ENCODE measurements at regions of chr1 and their contacts with region 1.

Region 1: DNA sequence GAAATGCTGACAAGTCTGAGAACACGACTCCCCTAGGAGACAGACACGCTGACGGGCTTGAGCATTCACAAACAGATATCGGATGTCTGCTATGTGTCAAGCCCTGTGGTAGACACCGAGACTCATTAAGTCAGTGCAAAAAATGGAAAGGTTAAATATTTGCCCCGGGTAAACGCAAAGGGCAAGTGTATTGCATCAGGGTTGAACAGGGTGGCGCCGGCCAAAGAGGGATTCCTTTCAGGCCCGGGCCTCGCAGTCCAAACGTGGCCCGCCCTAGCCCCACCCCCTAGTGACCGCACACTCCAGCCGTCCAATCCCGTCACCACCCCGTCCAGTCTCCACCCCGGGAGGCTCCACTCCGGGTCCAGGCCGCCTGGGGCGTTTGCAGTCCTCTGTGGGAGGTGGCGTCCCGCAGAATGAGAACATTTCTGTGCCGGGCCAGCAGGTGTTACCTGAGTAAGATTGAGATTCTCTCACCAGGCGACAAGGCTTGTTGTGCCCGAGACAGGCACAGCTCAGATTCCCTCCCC is 16.3 kb upstream of the TMEM9 start:
- DNase-seq: peak; percentile 97
- H3K4me3 ChIP-seq: peak overlapping the region; percentile 70 to 79
- H3K27ac ChIP-seq: peak overlapping the region in 1 of 2 experiments; percentile 76; a peak in 2 of 4 replicates
- H3K4me1 ChIP-seq: peaks cover 0 to 10% of the 10 kb centered on the region in 2 experiments; a peak in 2 of 4 replicates
- H3K27me3 ChIP-seq: 0 out of 2 replicates have a peak, but pooled peaks cover 7% of the 10 kb centered on the region
- CTCF ChIP-seq: no peak
- EP300 ChIP-seq: no peak
- RAD21 ChIP-seq: no peak

Region 2: GRCh38 chr1:201096035-201096434 is 74.6 kb before region 1 on chr1:
- CTCF ChIA-PET with region 1: no interaction called
- POLR2A ChIA-PET with region 1: no interaction called
- DNase-seq: no peak
- H3K4me3 ChIP-seq: no peak overlapping the region
- H3K27ac ChIP-seq: no peak overlapping the region
- H3K4me1 ChIP-seq: no peaks in the 10 kb centered on the region
- H3K27me3 ChIP-seq: peaks cover 22% of the 10 kb centered on the region
- CTCF ChIP-seq: no peak
- EP300 ChIP-seq: no peak
- RAD21 ChIP-seq: no peak

Region 3: DNA sequence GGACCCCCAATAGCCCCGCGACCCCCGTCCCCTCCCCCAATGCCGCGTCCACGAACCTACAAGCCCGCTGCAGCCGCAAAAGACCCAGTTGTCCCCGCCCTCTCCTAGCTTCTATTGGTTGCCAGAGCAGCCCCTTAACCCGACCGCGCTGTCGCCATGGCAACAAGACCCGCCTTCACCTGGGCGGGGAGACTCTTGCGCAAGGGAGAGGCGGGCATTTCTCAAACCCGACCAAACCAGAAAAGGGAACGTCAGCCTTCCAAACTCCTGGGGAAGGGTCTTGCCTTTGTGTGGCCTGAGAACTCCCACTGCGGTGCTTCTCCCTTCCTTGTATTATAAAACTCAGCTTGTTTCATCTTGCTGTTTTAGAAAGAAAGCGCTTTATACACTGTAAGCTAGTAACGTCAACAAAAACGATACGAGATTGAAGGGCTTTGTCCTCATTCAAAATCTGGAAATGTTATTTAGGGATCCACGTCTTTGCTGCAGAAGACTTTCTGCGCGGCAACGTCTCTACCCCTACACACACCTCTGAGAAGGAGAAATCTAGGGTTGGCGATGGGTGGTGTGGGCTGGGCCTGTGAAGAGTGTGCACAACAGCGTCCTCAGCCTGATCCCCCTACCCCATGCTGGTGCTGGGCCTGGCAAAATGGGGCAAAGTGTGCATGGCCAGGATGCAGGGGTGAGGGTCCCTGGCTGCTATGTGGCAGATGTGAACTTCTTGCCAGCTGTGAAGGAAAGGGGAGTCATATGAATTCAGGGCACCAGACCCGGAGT is 16.0 kb before region 1 on chr1 and contains the start of gene TMEM9:
- CTCF ChIA-PET with region 1: interaction called, 15 read pairs
- POLR2A ChIA-PET with region 1: interaction called, 3 read pairs
- DNase-seq: peak; percentile 97
- H3K4me3 ChIP-seq: peak within 1 kb of the TSS; percentile 63 to 84
- H3K27ac ChIP-seq: peak within 1 kb of the TSS in 1 of 2 experiments; percentile 86; a peak in 2 of 4 replicates
- H3K4me1 ChIP-seq: peaks cover 11 to 16% of the 10 kb centered on the region in 2 experiments; a peak in 3 of 4 replicates
- H3K27me3 ChIP-seq: no peaks in the 10 kb centered on the region
- CTCF ChIP-seq: no peak
- EP300 ChIP-seq: no peak
- RAD21 ChIP-seq: no peak
- polyA plus RNA-seq, gene TMEM9: 126 and 160 TPM in 2 replicates

Region 4: GRCh38 chr1:201282931-201283829 is 112.6 kb after region 1 on chr1 and contains the start of gene PKP1:
- CTCF ChIA-PET with region 1: no interaction called
- POLR2A ChIA-PET with region 1: no interaction called
- DNase-seq: no peak
- H3K4me3 ChIP-seq: no peak within 1 kb of the TSS
- H3K27ac ChIP-seq: no peak within 1 kb of the TSS
- H3K4me1 ChIP-seq: peaks cover 0 to 17% of the 10 kb centered on the region in 2 experiments; a peak in 2 of 4 replicates
- H3K27me3 ChIP-seq: peaks cover 5% of the 10 kb centered on the region; the same call in 1 of the 2 replicates
- CTCF ChIP-seq: no peak
- EP300 ChIP-seq: no peak
- RAD21 ChIP-seq: no peak
- polyA plus RNA-seq, gene PKP1: not detected in 2 replicates

Measured in SK-N-SH (cell line).